ENCODE measurements at regions of chr18 and their contacts with region 1.

Region 1: DNA sequence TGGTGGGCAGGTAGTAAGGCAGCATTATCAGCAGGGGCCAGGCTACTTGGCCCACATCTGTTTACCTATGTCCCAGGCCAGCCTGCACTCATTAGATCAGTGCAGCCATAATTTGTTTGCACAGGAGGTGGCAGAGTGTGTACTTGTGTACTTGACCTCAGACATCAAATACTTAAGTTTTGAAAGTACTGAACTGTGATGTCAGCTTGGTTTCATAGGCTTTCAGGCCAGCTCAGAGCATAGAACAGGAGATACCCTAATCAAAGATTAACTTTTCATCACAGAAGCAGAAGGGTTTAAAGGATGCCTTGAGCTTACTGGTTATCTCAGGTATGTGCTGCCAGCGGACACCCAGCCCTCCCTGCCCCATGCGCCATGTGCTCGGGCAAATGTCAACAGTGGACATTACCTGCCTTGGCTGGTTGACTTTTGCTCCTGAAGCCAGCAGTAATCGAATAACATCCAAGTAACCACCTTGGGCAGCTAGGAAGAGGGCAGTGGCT is 33.2 kb downstream of the ANKRD29 start:
- DNase-seq: no peak
- ATAC-seq: no peak
- H3K4me3 ChIP-seq: no peak overlapping the region
- H3K27ac ChIP-seq: no peak overlapping the region
- H3K4me1 ChIP-seq: peaks cover 0 to 11% (median 0%) of the 10 kb centered on the region in 12 donors
- H3K27me3 ChIP-seq: no peaks in the 10 kb centered on the region
- CTCF ChIP-seq: no peak
- POLR2A ChIP-seq: no peak

Region 2: DNA sequence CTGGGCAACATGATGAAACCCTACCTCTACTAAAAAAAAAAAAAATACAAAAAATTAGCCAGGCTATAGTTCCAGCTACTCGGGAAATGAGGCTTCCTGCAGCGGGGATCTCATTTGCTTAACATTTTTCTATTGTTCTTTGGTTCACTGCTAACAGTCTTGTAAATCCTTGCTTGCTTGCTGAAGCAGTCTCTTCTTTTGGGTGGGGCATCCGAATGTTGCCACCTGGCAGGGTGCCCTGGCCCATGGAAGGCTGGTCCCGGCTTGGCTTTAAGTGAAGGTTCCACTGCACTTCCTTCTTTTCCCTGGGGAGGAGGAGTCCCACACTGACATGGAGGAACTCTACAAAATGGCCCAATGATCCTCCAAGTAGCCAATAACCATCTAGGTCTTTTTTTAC is 39.2 kb after region 1 on chr18:
- intact Hi-C with region 1: loop called in 1 of 10 experiments (anchors 5 kb)
- DNase-seq: no peak
- ATAC-seq: no peak
- H3K4me3 ChIP-seq: no peak overlapping the region
- H3K27ac ChIP-seq: no peak overlapping the region
- H3K4me1 ChIP-seq: peaks cover 0 to 29% (median 5%) of the 10 kb centered on the region in 12 donors
- H3K27me3 ChIP-seq: no peaks in the 10 kb centered on the region
- CTCF ChIP-seq: no peak
- POLR2A ChIP-seq: no peak

Region 3: DNA sequence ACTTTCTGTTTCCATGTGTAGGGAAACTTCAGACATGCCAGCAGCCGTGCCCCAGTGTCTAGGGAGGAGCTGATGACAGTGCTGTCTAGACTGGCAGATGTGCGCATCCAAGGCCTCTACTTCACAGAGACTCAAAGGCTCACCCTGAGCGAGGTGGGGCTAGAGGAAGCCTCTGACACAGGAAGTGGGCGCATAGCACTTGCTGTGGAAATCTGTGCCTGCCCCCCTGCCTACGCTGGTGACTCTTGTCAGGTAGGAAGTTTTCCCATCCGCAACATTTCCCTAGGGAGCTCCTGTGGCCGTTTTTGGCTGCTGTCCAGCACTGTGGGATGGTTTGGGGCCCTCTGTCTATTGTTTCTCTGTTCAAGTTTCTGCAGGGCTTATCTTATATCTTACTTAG is 241.9 kb after region 1 on chr18:
- intact Hi-C with region 1: no loop called
- DNase-seq: peak in 4 of 5 donors; percentile 33 to 56 (median 47)
- ATAC-seq: peak in 3 of 4 donors; percentile 28 to 79 (median 53)
- H3K4me3 ChIP-seq: no peak overlapping the region
- H3K27ac ChIP-seq: no peak overlapping the region
- H3K4me1 ChIP-seq: peaks cover 0 to 21% (median 0%) of the 10 kb centered on the region in 12 donors
- H3K27me3 ChIP-seq: no peaks in the 10 kb centered on the region
- CTCF ChIP-seq: no peak
- POLR2A ChIP-seq: no peak

Region 4: GRCh38 chr18:23924813-23925212 is 295.3 kb after region 1 on chr18:
- intact Hi-C with region 1: loop called in 1 of 10 experiments (anchors 10 kb)
- DNase-seq: no peak
- ATAC-seq: no peak
- H3K4me3 ChIP-seq: no peak overlapping the region
- H3K27ac ChIP-seq: no peak overlapping the region
- H3K4me1 ChIP-seq: no peaks in the 10 kb centered on the region
- H3K27me3 ChIP-seq: no peaks in the 10 kb centered on the region
- CTCF ChIP-seq: no peak
- POLR2A ChIP-seq: no peak